IMR-90 (cell line): ENCODE measurements at regions of chr3 and their contacts with region 1.

Region 1: GRCh38 chr3:195297446-195297845 is 26.5 kb upstream of the XXYLT1 start:
- DNase-seq: no peak
- ATAC-seq: no peak
- H3K4me3 ChIP-seq: no peak overlapping the region
- H3K27ac ChIP-seq: no peak overlapping the region
- H3K4me1 ChIP-seq: peaks cover 3% of the 10 kb centered on the region
- H3K27me3 ChIP-seq: no peaks in the 10 kb centered on the region
- CTCF ChIP-seq: no peak
- POLR2A ChIP-seq: no peak
- RAD21 ChIP-seq: no peak

Region 2: GRCh38 chr3:195421393-195421792 is 123.9 kb after region 1 on chr3:
- CTCF ChIA-PET with region 1: no interaction called
- POLR2A ChIA-PET with region 1: no interaction called
- dilution Hi-C with region 1: no loop called
- in situ Hi-C with region 1: loop called (anchors 10 kb)
- intact Hi-C with region 1: no loop called
- DNase-seq: peak; percentile 43
- ATAC-seq: no peak; the same call in 1 of the 2 replicates
- H3K4me3 ChIP-seq: no peak overlapping the region
- H3K27ac ChIP-seq: no peak overlapping the region
- H3K4me1 ChIP-seq: peaks cover 2% of the 10 kb centered on the region; the same call in 1 of the 2 replicates
- H3K27me3 ChIP-seq: no peaks in the 10 kb centered on the region
- CTCF ChIP-seq: no peak
- POLR2A ChIP-seq: no peak
- RAD21 ChIP-seq: no peak

Region 3: GRCh38 chr3:195558602-195559001 is 261.2 kb after region 1 on chr3:
- CTCF ChIA-PET with region 1: no interaction called
- POLR2A ChIA-PET with region 1: no interaction called
- dilution Hi-C with region 1: no loop called
- in situ Hi-C with region 1: no loop called
- intact Hi-C with region 1: no loop called
- DNase-seq: peak; percentile 21
- ATAC-seq: no peak
- H3K4me3 ChIP-seq: no peak overlapping the region
- H3K27ac ChIP-seq: no peak overlapping the region
- H3K4me1 ChIP-seq: no peaks in the 10 kb centered on the region
- H3K27me3 ChIP-seq: peaks cover 30% of the 10 kb centered on the region
- CTCF ChIP-seq: peak; percentile 33
- POLR2A ChIP-seq: no peak
- RAD21 ChIP-seq: peak; percentile 32; the same call in 1 of the 2 replicates